ENCODE measurements at regions of chr10 and their contacts with region 1.

Region 1: DNA sequence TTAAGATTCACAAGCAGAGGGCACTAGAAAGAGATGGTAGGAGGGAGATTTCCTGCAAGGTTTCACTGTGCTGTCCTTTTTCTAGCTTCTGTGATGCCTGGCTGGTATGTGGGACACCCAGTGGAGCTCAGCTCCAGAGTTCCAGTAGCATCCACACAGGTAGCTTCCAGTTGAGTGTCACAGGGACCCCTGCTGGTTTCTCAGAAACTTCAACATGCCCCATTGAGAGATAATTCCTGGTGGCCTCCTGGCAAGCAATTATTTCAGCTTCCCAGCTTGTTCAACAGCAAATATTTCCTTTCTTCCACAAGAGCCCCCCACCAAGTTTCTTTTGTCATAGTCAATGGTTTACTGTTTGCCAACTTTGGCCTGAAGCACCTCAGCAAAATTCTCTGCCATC is 858.7 kb downstream of the REEP3 start:
- DNase-seq: peak; percentile 12
- ATAC-seq: peak; percentile 76; the same call in 1 of the 2 replicates
- H3K4me3 ChIP-seq: no peak overlapping the region
- H3K27ac ChIP-seq: no peak overlapping the region
- H3K4me1 ChIP-seq: no peaks in the 10 kb centered on the region
- H3K27me3 ChIP-seq: no peaks in the 10 kb centered on the region
- CTCF ChIP-seq: peak; percentile 32 to 42 (median 42); a peak in 5 of 6 replicates
- POLR2A ChIP-seq: no peak
- RAD21 ChIP-seq: peak; percentile 46

Region 2: DNA sequence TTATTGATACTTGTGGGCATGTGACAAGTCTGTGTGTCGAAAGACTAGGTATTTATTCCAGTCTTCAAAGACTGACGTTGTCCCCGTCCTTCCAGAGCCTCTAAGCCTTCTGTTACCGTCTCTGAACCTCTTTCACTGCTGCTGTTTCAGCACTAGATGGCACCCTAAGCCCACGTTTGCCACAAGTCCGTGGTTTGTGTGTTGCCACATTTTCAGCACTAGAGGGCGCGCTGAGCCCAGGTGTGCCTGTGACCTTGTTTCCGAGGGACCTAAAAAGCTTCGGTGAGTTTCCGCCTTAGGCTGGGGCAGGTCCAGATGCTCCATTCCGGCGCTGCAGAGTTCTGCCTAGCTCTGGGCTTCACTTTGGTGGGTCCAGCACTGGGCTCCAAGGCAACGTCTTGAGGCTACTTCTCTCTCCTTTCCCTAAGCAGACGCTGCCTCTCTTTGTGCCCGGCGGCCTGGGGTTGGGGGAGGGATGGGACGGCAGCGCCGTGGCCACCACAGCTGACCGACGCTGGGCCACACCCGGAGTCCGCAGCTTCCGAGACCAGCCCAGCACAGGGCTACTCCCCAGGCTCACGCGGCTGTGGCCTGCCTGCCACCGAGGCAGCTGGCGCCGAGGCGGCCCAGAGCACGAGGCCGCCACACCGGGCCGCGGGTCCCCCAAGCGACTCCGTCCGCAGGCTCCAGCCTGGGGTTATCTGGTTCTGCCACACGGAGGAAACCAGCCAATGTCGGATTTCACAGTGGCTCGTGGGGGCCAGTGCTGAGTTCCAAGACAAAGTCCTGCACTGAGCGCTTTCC is 338.5 kb before region 1 on chr10:
- CTCF ChIA-PET with region 1: interaction called, 4 read pairs
- POLR2A ChIA-PET with region 1: no interaction called
- RAD21 ChIA-PET with region 1: no interaction called
- intact Hi-C with region 1: loop called (anchors 5 kb)
- DNase-seq: peak; percentile 68
- ATAC-seq: peak; percentile 98
- H3K4me3 ChIP-seq: peak overlapping the region in 1 of 2 experiments; percentile 21; a peak in 1 of 4 replicates
- H3K27ac ChIP-seq: no peak overlapping the region
- H3K4me1 ChIP-seq: peaks cover 0 to 4% of the 10 kb centered on the region in 2 experiments; a peak in 1 of 4 replicates
- H3K27me3 ChIP-seq: no peaks in the 10 kb centered on the region
- CTCF ChIP-seq: peak; percentile 99 to 100 (median 99)
- POLR2A ChIP-seq: no peak
- RAD21 ChIP-seq: peak; percentile 95

Region 3: GRCh38 chr10:64115913-64116643 is 263.8 kb before region 1 on chr10:
- CTCF ChIA-PET with region 1: interaction called, 5 read pairs
- POLR2A ChIA-PET with region 1: no interaction called
- RAD21 ChIA-PET with region 1: no interaction called
- intact Hi-C with region 1: loop called (anchors 10 kb)
- DNase-seq: no peak
- ATAC-seq: peak; percentile 76
- H3K4me3 ChIP-seq: no peak overlapping the region
- H3K27ac ChIP-seq: no peak overlapping the region
- H3K4me1 ChIP-seq: no peaks in the 10 kb centered on the region
- H3K27me3 ChIP-seq: no peaks in the 10 kb centered on the region
- CTCF ChIP-seq: peak; percentile 30 to 67 (median 65); a peak in 5 of 6 replicates
- POLR2A ChIP-seq: no peak
- RAD21 ChIP-seq: peak; percentile 59